Gastrocnemius medialis (tissue), 4 donors: ENCODE measurements at regions of chr1 and their contacts with region 1.

Region 1: DNA sequence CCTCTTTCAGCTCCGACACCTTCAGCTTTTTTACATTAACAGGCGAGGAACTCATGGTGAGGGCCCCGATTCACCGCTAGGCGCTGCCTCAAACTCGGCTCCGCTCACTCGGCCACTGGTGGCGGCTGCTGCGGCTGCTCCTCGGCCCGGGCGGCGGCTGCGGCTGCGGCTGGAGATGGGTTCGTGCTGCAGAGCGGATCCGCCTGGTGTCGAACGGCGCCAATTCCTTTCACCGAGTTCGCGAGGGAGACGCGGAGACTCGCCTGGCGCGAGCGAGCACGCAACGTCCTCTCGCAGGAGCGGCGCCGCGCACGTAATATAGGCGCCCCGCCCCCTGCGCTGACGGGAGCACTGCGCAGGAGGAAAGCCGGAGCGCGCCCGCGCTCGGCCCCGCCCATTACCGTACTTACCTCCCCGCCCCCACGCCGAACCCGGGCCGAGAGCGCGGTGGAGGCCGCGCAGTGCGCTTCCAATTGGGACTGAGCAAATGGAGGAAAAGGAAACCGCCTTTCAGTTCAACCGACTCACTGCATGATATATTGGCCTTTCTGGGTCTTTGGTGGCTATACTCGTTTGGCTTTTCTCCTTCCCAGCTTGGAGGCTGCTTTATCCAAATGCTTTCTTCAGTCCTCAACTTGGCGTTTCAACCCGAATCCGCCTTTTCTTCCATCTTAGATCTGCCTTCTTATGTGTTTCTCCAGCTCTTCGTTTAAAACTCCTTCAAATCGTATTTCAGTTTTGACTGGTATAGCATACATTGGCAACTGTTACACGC is at the start of gene HNRNPU:
- DNase-seq: peak; percentile 92 to 97
- ATAC-seq: peak; percentile 66 to 72
- H3K4me3 ChIP-seq: peak within 1 kb of the TSS; percentile 82 to 92 (median 86)
- H3K27ac ChIP-seq: peak within 1 kb of the TSS; percentile 93 to 100 (median 100)
- H3K4me1 ChIP-seq: peaks cover 42 to 44% of the 10 kb centered on the region in 2 donors
- H3K27me3 ChIP-seq: no peaks in the 10 kb centered on the region
- CTCF ChIP-seq: peak; percentile 16 to 71 (median 47)
- POLR2A ChIP-seq: peak; percentile 99
- total RNA-seq, gene HNRNPU: 167 to 243 (median 207) TPM

Region 2: GRCh38 chr1:244451951-244452795 is 412.3 kb before region 1 on chr1:
- in situ Hi-C with region 1: no loop called
- intact Hi-C with region 1: loop called (anchors 2 kb)
- DNase-seq: peak; percentile 99
- ATAC-seq: peak; percentile 92 to 94
- H3K4me3 ChIP-seq: peak overlapping the region; percentile 89 to 99 (median 94)
- H3K27ac ChIP-seq: peak overlapping the region; percentile 96 to 99 (median 98)
- H3K4me1 ChIP-seq: peaks cover 28% of the 10 kb centered on the region in 2 donors
- H3K27me3 ChIP-seq: no peaks in the 10 kb centered on the region
- CTCF ChIP-seq: peak in 4 of 5 experiments; percentile 29 to 53 (median 46)
- POLR2A ChIP-seq: no peak

Region 3: DNA sequence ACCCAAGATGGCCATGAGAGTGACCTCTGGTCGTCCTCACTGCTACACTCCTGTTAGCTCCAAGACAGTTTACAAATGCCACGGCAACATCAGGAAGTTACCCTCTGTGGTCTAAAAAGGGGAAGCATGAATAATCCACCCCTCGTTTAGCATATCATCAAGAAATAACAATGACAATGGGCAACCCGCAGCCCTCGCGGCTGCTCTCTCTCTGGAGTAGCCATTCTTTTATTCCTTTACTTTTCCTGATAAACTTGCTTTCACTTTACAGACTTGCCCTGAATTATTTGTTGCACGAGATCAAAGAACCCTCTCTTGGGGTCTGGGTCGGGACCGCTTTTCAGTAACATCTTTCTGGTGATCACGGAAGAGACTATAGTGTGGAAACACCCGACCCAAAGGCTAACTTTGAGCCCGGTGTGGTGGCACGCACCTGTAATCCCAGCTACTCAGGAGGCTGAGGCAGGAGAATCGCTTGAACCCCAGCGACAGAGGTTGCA is 48.8 kb before region 1 on chr1:
- in situ Hi-C with region 1: no loop called
- intact Hi-C with region 1: no loop called
- DNase-seq: no peak
- ATAC-seq: no peak
- H3K4me3 ChIP-seq: no peak overlapping the region
- H3K27ac ChIP-seq: no peak overlapping the region
- H3K4me1 ChIP-seq: no peaks in the 10 kb centered on the region
- H3K27me3 ChIP-seq: peaks cover 0 to 7% (median 0%) of the 10 kb centered on the region in 3 donors
- CTCF ChIP-seq: no peak
- POLR2A ChIP-seq: no peak

Region 4: GRCh38 chr1:244896550-244896949 is 32.1 kb after region 1 on chr1:
- in situ Hi-C with region 1: no loop called
- intact Hi-C with region 1: loop called (anchors 2 kb)
- DNase-seq: no peak
- ATAC-seq: no peak
- H3K4me3 ChIP-seq: no peak overlapping the region
- H3K27ac ChIP-seq: no peak overlapping the region
- H3K4me1 ChIP-seq: peaks cover 12 to 13% of the 10 kb centered on the region in 2 donors
- H3K27me3 ChIP-seq: no peaks in the 10 kb centered on the region
- CTCF ChIP-seq: no peak
- POLR2A ChIP-seq: no peak

Region 5: DNA sequence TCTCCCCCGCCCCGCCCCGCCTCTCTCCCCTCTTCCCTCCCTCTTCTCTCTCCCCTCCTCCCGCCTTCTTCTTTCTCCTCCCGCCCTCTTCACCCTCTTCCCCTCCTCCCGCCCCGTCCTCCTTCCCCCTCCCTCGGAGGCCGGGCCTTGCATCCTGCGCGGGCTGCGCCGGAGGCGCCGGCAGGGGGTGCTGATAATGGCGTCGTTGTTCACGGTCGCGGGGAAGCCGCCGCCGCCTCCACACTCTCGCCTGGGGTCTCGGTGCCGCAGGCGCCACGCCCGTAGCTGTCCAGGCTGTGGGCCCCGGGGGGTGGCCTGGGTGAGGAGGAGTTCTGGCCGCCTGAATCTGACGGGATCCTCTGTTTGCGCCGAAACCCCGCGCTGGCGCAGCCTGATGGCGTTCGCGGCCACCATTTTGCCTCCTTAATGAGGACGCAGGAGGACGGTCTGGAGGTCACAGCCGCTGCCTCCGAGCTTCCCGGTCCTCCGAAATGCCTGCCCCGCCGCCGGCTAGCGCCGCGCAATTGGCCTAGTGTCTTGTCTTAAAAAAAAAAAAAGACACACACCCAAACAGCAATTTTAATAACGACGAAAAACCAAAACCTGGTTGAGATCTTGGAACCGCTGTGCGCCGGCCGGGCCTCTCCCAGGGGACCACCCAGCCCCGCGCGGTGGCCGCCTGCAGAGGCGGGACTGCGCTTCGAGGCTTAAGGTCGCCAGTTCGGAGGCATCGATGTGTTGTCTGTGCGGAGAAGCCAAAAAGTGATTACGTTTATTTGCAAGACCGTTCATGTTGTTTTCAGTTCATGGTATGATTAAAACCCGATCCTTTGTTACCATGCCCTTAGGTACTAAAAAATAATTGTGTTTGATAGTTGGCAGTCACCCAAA is 106.5 kb after region 1 on chr1:
- in situ Hi-C with region 1: loop called (anchors 10 to 25 kb)
- intact Hi-C with region 1: loop called (anchors 1 kb)
- DNase-seq: peak; percentile 93 to 97
- ATAC-seq: peak; percentile 78 to 83
- H3K4me3 ChIP-seq: peak overlapping the region; percentile 67 to 84 (median 79)
- H3K27ac ChIP-seq: peak overlapping the region; percentile 98 to 100 (median 98)
- H3K4me1 ChIP-seq: peaks cover 20 to 22% of the 10 kb centered on the region in 2 donors
- H3K27me3 ChIP-seq: no peaks in the 10 kb centered on the region
- CTCF ChIP-seq: peak; percentile 29 to 75 (median 63)
- POLR2A ChIP-seq: peak; percentile 73 to 80

Region 6: DNA sequence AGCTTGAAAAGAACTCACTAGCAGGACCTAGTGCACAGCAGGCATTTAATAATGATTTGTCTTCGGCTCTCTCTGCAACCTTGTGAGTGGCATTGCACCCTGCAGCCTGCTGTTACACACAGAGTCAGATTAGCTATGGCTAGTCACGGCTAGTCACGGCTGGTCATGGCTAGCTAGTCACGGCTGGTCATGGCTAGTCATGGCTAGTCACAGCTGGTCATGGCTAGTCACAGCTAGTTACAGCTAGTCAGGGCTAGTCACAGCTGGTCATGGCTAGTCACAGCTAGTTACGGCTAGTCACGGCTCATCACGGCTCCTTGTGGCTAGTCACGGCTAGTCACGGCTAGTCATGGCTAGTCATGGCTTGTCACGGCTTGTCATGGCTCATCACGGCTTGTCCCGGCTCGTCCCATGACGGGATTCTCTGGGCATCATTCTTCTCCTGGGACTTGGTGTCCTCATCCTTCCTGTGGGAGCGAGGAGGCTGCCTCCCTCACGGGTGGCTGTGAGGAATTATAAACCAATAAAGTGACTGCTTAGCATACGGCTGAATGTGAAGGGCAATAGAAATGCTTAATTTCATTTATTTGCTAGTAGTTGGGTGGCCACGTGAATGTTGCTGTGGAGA is 277.8 kb after region 1 on chr1:
- in situ Hi-C with region 1: no loop called
- intact Hi-C with region 1: no loop called
- DNase-seq: no peak
- ATAC-seq: no peak
- H3K4me3 ChIP-seq: no peak overlapping the region
- H3K27ac ChIP-seq: no peak overlapping the region
- H3K4me1 ChIP-seq: no peaks in the 10 kb centered on the region
- H3K27me3 ChIP-seq: peaks cover 0 to 1% (median 0%) of the 10 kb centered on the region in 3 donors
- CTCF ChIP-seq: no peak
- POLR2A ChIP-seq: no peak